A673 (cell line): ENCODE measurements at regions of chr2 and their contacts with region 1.

Region 1: GRCh38 chr2:112726497-112727190 is 5.8 kb downstream of the NT5DC4 start:
- DNase-seq: peak; percentile 94
- H3K4me3 ChIP-seq: no peak overlapping the region
- H3K27ac ChIP-seq: no peak overlapping the region
- H3K4me1 ChIP-seq: no peaks in the 10 kb centered on the region
- H3K27me3 ChIP-seq: no peaks in the 10 kb centered on the region
- CTCF ChIP-seq: peak; percentile 99

Region 2: DNA sequence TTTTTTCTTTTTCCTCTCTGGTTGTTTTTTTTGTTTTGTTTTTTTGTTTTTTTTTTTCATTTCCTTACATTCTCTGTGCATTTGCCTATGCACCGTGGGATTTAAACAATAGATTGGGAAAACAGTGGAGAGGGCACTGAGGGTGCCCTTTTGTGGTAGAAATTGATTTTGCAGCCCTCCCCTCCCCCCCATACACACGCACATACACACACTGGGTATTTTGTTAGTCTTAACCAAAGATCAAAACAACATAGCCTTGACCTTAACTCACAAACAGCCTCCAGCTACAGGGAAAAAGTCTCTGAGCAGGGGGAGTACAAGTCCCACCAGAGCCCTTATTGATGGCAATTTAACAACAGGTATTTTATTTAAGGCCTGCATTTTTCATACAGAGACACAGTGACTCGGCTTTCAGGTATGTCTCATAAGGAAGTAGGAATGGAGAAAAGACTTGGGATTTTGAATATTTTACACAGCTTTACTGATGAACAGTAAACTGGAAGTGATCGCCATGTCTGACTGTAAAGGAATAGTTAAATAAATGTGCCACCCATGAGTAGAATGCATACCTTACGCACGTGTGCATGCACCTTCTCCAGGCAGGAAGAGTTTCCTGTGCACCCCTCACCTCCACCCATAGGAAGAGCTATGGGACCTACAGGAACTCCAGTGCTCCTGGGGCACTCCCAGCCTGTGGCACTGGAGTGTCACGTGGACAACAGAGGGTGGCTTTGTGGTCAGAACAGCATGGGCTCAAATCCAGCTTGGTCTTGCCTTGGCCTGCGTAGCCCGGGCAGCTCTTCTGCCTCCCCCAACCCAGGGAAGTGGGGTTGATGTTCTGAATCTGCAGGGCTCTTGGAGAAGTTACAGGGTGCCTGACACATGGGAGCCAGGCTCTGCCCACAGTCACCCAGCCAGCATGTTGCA is 1109.1 kb before region 1 on chr2:
- CTCF ChIA-PET with region 1: no interaction called
- POLR2A ChIA-PET with region 1: no interaction called
- intact Hi-C with region 1: no loop called
- DNase-seq: no peak
- H3K4me3 ChIP-seq: no peak overlapping the region
- H3K27ac ChIP-seq: no peak overlapping the region
- H3K4me1 ChIP-seq: no peaks in the 10 kb centered on the region
- H3K27me3 ChIP-seq: peaks cover 2% of the 10 kb centered on the region
- CTCF ChIP-seq: no peak

Region 3: DNA sequence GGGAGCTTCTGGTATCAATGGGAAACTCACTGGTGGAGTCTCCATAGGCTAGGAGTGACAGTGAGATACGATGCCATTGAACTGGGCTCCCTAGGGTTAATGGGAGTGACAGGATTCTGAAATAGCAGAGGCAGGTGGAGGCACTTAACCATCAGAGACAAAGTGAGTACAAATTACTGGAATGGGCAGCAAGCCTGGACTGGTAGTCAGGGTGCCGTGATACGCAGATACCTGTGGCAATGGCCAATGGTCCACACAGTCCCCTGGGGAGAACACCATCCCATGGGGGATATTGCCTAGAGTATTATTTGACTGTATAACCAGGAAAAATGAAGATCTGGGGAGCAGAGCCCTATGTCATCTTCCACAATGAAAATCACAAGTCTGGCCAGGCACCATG is 124.9 kb before region 1 on chr2:
- CTCF ChIA-PET with region 1: interaction called, 15 read pairs
- POLR2A ChIA-PET with region 1: no interaction called
- intact Hi-C with region 1: loop called (anchors 1 kb)
- DNase-seq: no peak
- H3K4me3 ChIP-seq: no peak overlapping the region
- H3K27ac ChIP-seq: no peak overlapping the region
- H3K4me1 ChIP-seq: peaks cover 6% of the 10 kb centered on the region
- H3K27me3 ChIP-seq: no peaks in the 10 kb centered on the region
- CTCF ChIP-seq: no peak

Region 4: DNA sequence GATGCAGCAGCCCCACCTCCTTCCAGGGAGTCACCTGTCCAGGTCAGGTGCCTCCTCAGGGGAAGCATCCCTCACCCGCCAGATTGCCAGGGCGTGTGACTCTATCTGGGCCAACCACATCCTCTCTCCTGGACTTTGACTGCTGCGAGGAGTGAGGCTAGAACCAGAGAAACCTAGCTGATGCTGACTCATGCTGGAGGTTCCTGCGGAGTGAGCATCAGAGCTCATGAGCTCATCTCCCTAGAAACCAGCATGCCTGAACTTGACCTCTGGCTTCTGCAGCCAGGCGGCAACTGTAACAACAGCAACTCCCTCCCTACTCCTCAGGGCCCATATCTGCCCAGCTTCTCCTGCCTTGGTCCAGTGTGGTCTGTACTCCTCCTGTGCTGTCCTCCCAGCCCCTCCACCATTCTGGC is 34.1 kb before region 1 on chr2:
- CTCF ChIA-PET with region 1: interaction called, 10 read pairs
- POLR2A ChIA-PET with region 1: no interaction called
- intact Hi-C with region 1: no loop called
- DNase-seq: no peak
- H3K4me3 ChIP-seq: no peak overlapping the region
- H3K27ac ChIP-seq: no peak overlapping the region
- H3K4me1 ChIP-seq: no peaks in the 10 kb centered on the region
- H3K27me3 ChIP-seq: no peaks in the 10 kb centered on the region
- CTCF ChIP-seq: no peak

Region 5: GRCh38 chr2:113203901-113204519 is 477.4 kb after region 1 on chr2:
- CTCF ChIA-PET with region 1: no interaction called
- POLR2A ChIA-PET with region 1: no interaction called
- intact Hi-C with region 1: no loop called
- DNase-seq: peak; percentile 85
- H3K4me3 ChIP-seq: no peak overlapping the region
- H3K27ac ChIP-seq: no peak overlapping the region
- H3K4me1 ChIP-seq: peaks cover 16% of the 10 kb centered on the region
- H3K27me3 ChIP-seq: no peaks in the 10 kb centered on the region
- CTCF ChIP-seq: peak; percentile 87